ENCODE measurements at regions of chr9 and their contacts with region 1.

Region 1: GRCh38 chr9:82134010-82134409 is 145.4 kb downstream of the SPATA31D1 start:
- DNase-seq: no peak
- ATAC-seq: no peak
- H3K4me3 ChIP-seq: no peak overlapping the region
- H3K27ac ChIP-seq: no peak overlapping the region
- H3K4me1 ChIP-seq: no peaks in the 10 kb centered on the region
- H3K27me3 ChIP-seq: no peaks in the 10 kb centered on the region
- CTCF ChIP-seq: no peak

Region 2: DNA sequence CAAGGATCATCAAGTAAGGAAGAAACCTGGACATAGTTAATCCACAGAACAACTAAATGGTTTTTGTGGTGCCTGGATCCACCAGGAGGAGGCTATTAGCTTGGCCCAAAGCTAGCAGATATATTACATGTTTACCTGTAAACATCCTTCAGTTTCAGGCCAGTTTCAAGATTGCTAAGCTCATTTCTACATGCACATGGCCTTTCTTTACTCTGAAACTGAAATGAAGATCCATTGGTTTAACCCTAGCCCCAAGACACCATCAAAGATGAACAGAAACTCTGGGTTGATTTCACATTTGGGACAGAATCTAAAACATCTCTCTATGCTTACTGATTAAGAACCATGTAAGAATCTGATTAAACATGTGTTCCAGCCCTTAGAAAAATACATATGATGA is 1056.4 kb before region 1 on chr9:
- intact Hi-C with region 1: loop called in 1 of 10 experiments (anchors 10 kb)
- DNase-seq: no peak
- ATAC-seq: no peak
- H3K4me3 ChIP-seq: no peak overlapping the region
- H3K27ac ChIP-seq: no peak overlapping the region
- H3K4me1 ChIP-seq: no peaks in the 10 kb centered on the region
- H3K27me3 ChIP-seq: no peaks in the 10 kb centered on the region
- CTCF ChIP-seq: no peak

Region 3: GRCh38 chr9:82073573-82074543 is 60.2 kb before region 1 on chr9:
- intact Hi-C with region 1: no loop called
- DNase-seq: no peak
- ATAC-seq: no peak
- H3K4me3 ChIP-seq: no peak overlapping the region
- H3K27ac ChIP-seq: no peak overlapping the region
- H3K4me1 ChIP-seq: no peaks in the 10 kb centered on the region
- H3K27me3 ChIP-seq: no peaks in the 10 kb centered on the region
- CTCF ChIP-seq: no peak